ENCODE measurements at regions of chr11 and their contacts with region 1.

Region 1: DNA sequence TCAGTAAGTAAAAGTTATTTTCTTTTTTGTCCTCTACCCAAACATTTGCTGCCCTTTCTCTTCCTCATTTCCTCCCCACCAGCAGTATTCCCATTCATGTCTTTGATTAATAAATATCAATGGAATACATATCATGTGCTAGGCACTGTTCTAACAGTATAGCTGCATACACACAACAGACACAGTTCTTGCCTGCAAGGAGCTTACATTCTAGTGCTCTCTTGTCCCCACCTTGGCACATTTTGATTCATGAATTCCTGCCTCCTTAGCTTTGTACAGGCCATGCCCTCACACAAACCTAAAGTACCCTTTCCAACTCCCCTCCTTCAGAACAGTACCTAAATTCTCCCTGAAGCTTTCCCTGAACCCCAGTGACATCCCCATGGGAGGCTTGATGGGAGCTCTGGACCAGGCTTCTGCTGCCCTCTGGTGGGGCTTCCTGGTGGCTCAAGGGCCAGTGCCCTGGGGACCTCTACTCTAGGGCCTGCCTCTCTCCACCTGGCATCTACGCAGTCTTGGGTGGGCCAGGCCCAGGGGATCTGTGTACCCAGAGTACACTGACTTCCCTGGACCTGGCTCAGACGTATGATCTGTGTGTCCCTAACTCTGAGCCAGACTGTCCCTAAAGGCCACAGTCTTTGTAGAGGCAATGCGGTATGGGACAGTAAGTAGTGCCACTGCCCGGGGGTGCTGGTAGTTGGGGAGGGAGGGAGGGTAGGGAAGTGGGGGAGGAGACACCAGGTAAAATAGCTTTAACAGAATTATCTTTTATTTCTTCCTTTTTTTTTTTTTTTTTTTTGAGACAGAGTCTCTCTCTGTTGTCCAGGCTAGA is 14.1 kb downstream of the RPS13 start:
- DNase-seq: peak; percentile 54
- ATAC-seq: peak; percentile 99
- H3K4me3 ChIP-seq: no peak overlapping the region
- H3K27ac ChIP-seq: no peak overlapping the region
- H3K4me1 ChIP-seq: no peaks in the 10 kb centered on the region
- H3K27me3 ChIP-seq: no peaks in the 10 kb centered on the region
- CTCF ChIP-seq: peak; percentile 95
- EP300 ChIP-seq: no peak
- POLR2A ChIP-seq: no peak
- RAD21 ChIP-seq: peak; percentile 95

Region 2: DNA sequence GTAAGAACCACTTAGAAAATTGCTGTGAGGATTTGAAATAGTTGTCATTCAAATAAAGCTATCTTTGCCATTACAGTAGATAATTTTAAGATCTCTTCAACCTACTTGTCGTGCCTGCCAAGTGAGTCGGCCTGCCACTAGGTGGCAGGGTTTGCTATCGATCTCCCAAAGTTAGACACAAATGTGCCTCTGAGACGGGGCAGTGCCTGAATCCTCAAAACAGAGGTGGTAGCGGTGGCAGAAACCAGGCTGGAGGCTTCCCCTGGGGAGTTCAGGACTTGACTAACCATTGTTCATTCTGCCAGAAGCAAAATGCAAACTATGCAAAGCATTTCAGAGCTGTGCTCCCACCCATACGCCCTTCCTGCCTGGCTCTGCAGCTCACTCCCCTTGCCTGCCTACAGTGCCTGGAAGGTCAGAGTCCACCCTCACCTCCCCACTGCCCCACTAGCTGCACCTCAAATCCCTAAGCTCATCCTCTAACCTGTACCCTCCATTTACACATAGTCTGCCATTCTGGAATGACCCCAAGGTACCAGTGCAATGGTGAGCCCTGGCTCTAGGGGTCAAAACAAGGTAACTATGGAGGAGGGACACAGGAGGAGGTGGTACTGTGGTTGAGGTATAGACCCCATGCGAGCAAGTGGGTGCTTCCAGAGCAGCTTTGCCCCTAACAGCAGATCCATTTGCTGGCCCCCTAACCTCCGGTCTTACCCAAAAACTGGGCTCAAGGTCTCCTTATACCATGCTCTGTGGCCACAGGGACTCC is 242.9 kb before region 1 on chr11:
- CTCF ChIA-PET with region 1: interaction called, 12 read pairs
- POLR2A ChIA-PET with region 1: no interaction called
- in situ Hi-C with region 1: loop called (anchors 10 kb)
- intact Hi-C with region 1: loop called (anchors 5 kb)
- DNase-seq: peak; percentile 62
- ATAC-seq: peak; percentile 94
- H3K4me3 ChIP-seq: peak overlapping the region in 1 of 3 experiments; percentile 53; a peak in 2 of 6 replicates
- H3K27ac ChIP-seq: peak overlapping the region; percentile 52
- H3K4me1 ChIP-seq: peaks cover 24% of the 10 kb centered on the region
- H3K27me3 ChIP-seq: no peaks in the 10 kb centered on the region
- CTCF ChIP-seq: peak; percentile 82
- EP300 ChIP-seq: no peak
- POLR2A ChIP-seq: no peak
- RAD21 ChIP-seq: peak; percentile 55; the same call in 1 of the 2 replicates

Region 3: GRCh38 chr11:16935518-16936302 is 127.7 kb before region 1 on chr11:
- CTCF ChIA-PET with region 1: interaction called, 12 read pairs
- POLR2A ChIA-PET with region 1: no interaction called
- in situ Hi-C with region 1: no loop called
- intact Hi-C with region 1: loop called (anchors 1 kb)
- DNase-seq: no peak
- ATAC-seq: peak; percentile 63
- H3K4me3 ChIP-seq: no peak overlapping the region
- H3K27ac ChIP-seq: no peak overlapping the region
- H3K4me1 ChIP-seq: no peaks in the 10 kb centered on the region
- H3K27me3 ChIP-seq: no peaks in the 10 kb centered on the region
- CTCF ChIP-seq: peak; percentile 70
- EP300 ChIP-seq: no peak
- POLR2A ChIP-seq: no peak
- RAD21 ChIP-seq: 0 out of 2 replicates have a peak, but pooled peaks have one; percentile 37

Region 4: DNA sequence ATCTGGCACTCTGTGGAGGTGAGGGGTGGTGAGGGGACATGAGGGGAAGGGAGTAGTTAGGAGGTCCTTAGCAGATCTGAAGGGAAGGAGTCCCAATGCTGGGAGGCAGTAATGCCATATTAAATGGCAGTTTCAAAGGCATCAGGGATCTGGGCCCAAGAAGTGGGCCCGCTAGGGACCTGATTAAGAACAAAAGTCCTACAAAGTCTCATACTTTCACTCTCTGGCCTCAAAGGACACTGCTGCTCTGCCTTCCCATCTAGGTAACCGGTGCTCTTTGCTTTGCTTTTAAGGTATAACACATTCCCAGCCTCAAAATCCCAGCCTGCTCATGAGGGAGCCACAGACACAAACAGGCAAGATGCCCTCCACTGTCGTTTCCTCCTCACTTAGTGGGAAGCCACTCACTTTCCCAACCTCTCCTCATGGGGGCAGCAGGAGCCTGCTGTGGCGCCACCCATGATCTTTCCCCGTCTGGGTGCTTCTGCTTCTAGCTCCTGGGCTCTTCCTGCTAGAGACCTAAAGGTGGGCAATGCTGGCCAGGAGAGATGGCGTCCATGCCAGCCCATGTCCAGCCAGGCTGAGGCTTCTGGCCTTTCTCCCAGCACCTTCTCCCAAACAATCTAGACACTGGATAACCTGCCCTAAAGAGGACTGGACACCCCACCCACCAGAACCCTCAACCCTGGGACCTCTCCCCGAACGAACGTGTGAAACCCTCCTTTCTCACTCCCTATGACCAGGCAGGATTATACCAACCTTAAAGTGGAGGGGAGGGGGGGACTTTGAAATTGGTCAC is 117.5 kb before region 1 on chr11:
- CTCF ChIA-PET with region 1: interaction called, 46 read pairs
- POLR2A ChIA-PET with region 1: interaction called, 6 read pairs
- in situ Hi-C with region 1: loop called (anchors 5 kb)
- intact Hi-C with region 1: loop called (anchors 1 kb)
- DNase-seq: peak; percentile 68
- ATAC-seq: peak; percentile 99
- H3K4me3 ChIP-seq: no peak overlapping the region
- H3K27ac ChIP-seq: no peak overlapping the region
- H3K4me1 ChIP-seq: peaks cover 10% of the 10 kb centered on the region
- H3K27me3 ChIP-seq: no peaks in the 10 kb centered on the region
- CTCF ChIP-seq: peak; percentile 94
- EP300 ChIP-seq: no peak
- POLR2A ChIP-seq: no peak
- RAD21 ChIP-seq: peak; percentile 94

Region 5: GRCh38 chr11:17036666-17037542 is 26.5 kb before region 1 on chr11:
- CTCF ChIA-PET with region 1: interaction called, 23 read pairs
- POLR2A ChIA-PET with region 1: no interaction called
- in situ Hi-C with region 1: no loop called
- intact Hi-C with region 1: loop called (anchors 1 kb)
- DNase-seq: peak; percentile 66
- ATAC-seq: peak; percentile 94
- H3K4me3 ChIP-seq: no peak overlapping the region
- H3K27ac ChIP-seq: no peak overlapping the region
- H3K4me1 ChIP-seq: peaks cover 15% of the 10 kb centered on the region
- H3K27me3 ChIP-seq: no peaks in the 10 kb centered on the region
- CTCF ChIP-seq: peak; percentile 74
- EP300 ChIP-seq: no peak
- POLR2A ChIP-seq: no peak
- RAD21 ChIP-seq: peak; percentile 68